Psoas muscle (tissue), 8 donors: ENCODE measurements at regions of chr13 and their contacts with region 1.

Region 1: GRCh38 chr13:71759651-71760511 is 107.1 kb downstream of the DACH1 start:
- DNase-seq: no peak
- ATAC-seq: no peak
- H3K4me3 ChIP-seq: no peak overlapping the region
- H3K27ac ChIP-seq: no peak overlapping the region
- H3K4me1 ChIP-seq: no peaks in the 10 kb centered on the region
- H3K27me3 ChIP-seq: no peaks in the 10 kb centered on the region
- CTCF ChIP-seq: no peak

Region 2: GRCh38 chr13:71851498-71852409 is 91.9 kb after region 1 on chr13:
- intact Hi-C with region 1: loop called in 1 of 2 experiments (anchors 10 kb)
- DNase-seq: no peak
- ATAC-seq: no peak
- H3K4me3 ChIP-seq: no peak overlapping the region
- H3K27ac ChIP-seq: no peak overlapping the region
- H3K4me1 ChIP-seq: no peaks in the 10 kb centered on the region
- H3K27me3 ChIP-seq: no peaks in the 10 kb centered on the region
- CTCF ChIP-seq: no peak

Region 3: GRCh38 chr13:72204291-72204690 is 444.4 kb after region 1 on chr13:
- intact Hi-C with region 1: no loop called
- DNase-seq: no peak
- ATAC-seq: no peak
- H3K4me3 ChIP-seq: no peak overlapping the region
- H3K27ac ChIP-seq: no peak overlapping the region
- H3K4me1 ChIP-seq: no peaks in the 10 kb centered on the region
- H3K27me3 ChIP-seq: no peaks in the 10 kb centered on the region
- CTCF ChIP-seq: no peak